ENCODE measurements at regions of chr9 and their contacts with region 1.

Region 1: DNA sequence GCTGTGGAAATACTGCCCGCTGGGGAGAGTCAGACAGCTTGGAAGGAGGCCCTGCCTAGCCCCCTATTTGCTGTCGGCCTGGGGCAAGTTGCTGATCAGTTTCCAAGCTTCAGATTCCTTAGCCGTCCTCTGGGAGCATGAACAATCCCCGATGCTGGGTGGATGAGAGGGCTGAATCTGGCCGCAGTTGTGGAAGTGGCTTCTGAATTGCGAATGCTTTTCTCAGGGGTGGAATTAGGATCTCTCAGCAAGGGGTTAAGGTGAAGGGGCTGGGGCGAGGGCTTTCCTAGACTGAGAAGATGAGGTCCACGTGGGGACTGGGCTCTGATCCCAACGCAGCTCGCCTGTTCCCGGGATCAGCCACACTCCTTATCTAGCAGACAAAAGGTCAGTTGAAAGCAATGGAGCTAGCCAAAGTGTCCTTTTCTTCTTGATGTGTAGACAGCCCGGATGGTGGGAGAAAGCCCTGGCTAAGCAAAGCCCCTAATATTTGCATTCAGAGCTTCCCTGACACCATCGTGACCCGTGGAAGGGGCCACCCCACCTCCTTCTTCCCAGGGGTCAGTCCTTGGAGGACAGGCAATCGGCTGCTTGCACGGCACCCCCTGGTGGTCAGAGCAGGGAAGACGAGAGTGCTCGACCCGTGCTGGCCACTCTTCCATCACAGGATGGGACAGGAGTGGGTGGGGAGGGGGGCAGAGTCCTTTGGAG is 54.9 kb downstream of the COL15A1 start:
- DNase-seq: peak; percentile 61
- ATAC-seq: peak; percentile 62
- H3K4me3 ChIP-seq: no peak overlapping the region
- H3K4me3 Mint-ChIP-seq: no peak overlapping the region
- H3K27ac ChIP-seq: no peak overlapping the region
- H3K27ac Mint-ChIP-seq: no peak overlapping the region
- H3K4me1 ChIP-seq: peaks cover 2 to 15% of the 10 kb centered on the region in 2 donors
- H3K4me1 Mint-ChIP-seq: peaks cover 14% of the 10 kb centered on the region
- H3K27me3 ChIP-seq: peaks cover 0 to 9% (median 0%) of the 10 kb centered on the region in 4 experiments
- H3K27me3 Mint-ChIP-seq: no peaks in the 10 kb centered on the region
- CTCF ChIP-seq: peak; percentile 81

Region 2: GRCh38 chr9:98315551-98316060 is 683.0 kb before region 1 on chr9:
- CTCF ChIA-PET with region 1: no interaction called
- POLR2A ChIA-PET with region 1: no interaction called
- intact Hi-C with region 1: loop called (anchors 5 kb)
- DNase-seq: peak; percentile 85
- ATAC-seq: peak; percentile 92
- H3K4me3 ChIP-seq: no peak overlapping the region
- H3K4me3 Mint-ChIP-seq: no peak overlapping the region
- H3K27ac ChIP-seq: no peak overlapping the region
- H3K27ac Mint-ChIP-seq: no peak overlapping the region
- H3K4me1 ChIP-seq: no peaks in the 10 kb centered on the region
- H3K4me1 Mint-ChIP-seq: peaks cover 2% of the 10 kb centered on the region
- H3K27me3 ChIP-seq: peaks cover 0 to 4% (median 1%) of the 10 kb centered on the region in 4 experiments
- H3K27me3 Mint-ChIP-seq: no peaks in the 10 kb centered on the region
- CTCF ChIP-seq: peak; percentile 88

Region 3: DNA sequence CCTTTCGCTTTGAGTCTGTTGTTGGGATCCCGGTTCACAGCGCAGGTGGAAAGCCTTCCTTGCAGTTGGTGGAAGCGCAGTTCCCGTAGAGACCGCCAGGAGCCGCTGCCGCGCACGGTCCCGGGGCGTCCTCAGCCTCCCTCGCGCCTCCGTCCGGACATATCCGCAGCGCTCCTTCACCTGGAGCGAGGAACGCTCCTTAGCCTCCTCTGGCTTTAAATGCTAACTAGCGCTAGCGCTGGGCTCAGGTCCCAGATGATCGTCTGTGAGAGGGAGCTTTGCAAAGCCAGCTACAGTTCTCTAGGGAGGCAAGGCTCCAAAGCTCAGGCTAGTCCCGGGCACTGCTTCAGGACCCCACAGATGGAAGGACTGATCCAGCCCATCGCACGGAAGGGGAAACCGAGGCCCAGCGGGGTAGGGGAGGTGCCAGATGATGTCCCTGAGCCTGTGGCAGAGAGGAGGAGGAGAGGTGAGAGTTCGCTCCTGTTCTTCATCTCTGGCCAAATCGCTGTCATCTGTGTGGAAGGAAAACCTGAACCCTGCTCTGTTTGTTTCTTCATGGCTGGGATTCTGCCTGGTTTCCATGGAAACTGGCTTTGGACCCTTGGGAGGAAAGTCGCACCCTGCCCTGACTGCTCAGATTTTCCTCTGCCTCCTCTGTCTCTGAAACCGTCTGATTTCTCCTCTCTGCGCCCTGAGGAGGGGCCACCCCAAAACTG is 23.4 kb before region 1 on chr9:
- CTCF ChIA-PET with region 1: interaction called, 43 read pairs
- POLR2A ChIA-PET with region 1: no interaction called
- intact Hi-C with region 1: loop called (anchors 1 kb)
- DNase-seq: peak; percentile 82
- ATAC-seq: peak; percentile 99
- H3K4me3 ChIP-seq: peak overlapping the region in 4 of 5 experiments; percentile 3 to 47 (median 24)
- H3K4me3 Mint-ChIP-seq: peak overlapping the region; percentile 52
- H3K27ac ChIP-seq: no peak overlapping the region
- H3K27ac Mint-ChIP-seq: no peak overlapping the region
- H3K4me1 ChIP-seq: peaks cover 4 to 10% of the 10 kb centered on the region in 2 donors
- H3K4me1 Mint-ChIP-seq: peaks cover 6% of the 10 kb centered on the region
- H3K27me3 ChIP-seq: peaks cover 0 to 21% (median 10%) of the 10 kb centered on the region in 4 experiments
- H3K27me3 Mint-ChIP-seq: peaks cover 20% of the 10 kb centered on the region
- CTCF ChIP-seq: peak; percentile 97

Region 4: GRCh38 chr9:99040911-99041582 is 42.5 kb after region 1 on chr9:
- CTCF ChIA-PET with region 1: interaction called, 13 read pairs
- POLR2A ChIA-PET with region 1: no interaction called
- intact Hi-C with region 1: no loop called
- DNase-seq: no peak
- ATAC-seq: no peak
- H3K4me3 ChIP-seq: no peak overlapping the region
- H3K4me3 Mint-ChIP-seq: no peak overlapping the region
- H3K27ac ChIP-seq: no peak overlapping the region
- H3K27ac Mint-ChIP-seq: no peak overlapping the region
- H3K4me1 ChIP-seq: peaks cover 15 to 17% of the 10 kb centered on the region in 2 donors
- H3K4me1 Mint-ChIP-seq: peaks cover 23% of the 10 kb centered on the region
- H3K27me3 ChIP-seq: no peaks in the 10 kb centered on the region
- H3K27me3 Mint-ChIP-seq: no peaks in the 10 kb centered on the region
- CTCF ChIP-seq: no peak

Region 5: GRCh38 chr9:99104459-99105151 is 106.0 kb after region 1 on chr9 and contains the start of gene TGFBR1:
- CTCF ChIA-PET with region 1: interaction called, 19 read pairs
- POLR2A ChIA-PET with region 1: no interaction called
- intact Hi-C with region 1: no loop called
- DNase-seq: peak; percentile 96
- ATAC-seq: peak; percentile 83
- H3K4me3 ChIP-seq: peak within 1 kb of the TSS; percentile 64 to 87 (median 79)
- H3K4me3 Mint-ChIP-seq: peak within 1 kb of the TSS; percentile 97
- H3K27ac ChIP-seq: peak within 1 kb of the TSS; percentile 16 to 74
- H3K27ac Mint-ChIP-seq: peak within 1 kb of the TSS; percentile 89
- H3K4me1 ChIP-seq: peaks cover 40 to 44% of the 10 kb centered on the region in 2 donors
- H3K4me1 Mint-ChIP-seq: peaks cover 48% of the 10 kb centered on the region
- H3K27me3 ChIP-seq: no peaks in the 10 kb centered on the region
- H3K27me3 Mint-ChIP-seq: no peaks in the 10 kb centered on the region
- CTCF ChIP-seq: no peak
- total RNA-seq, gene TGFBR1: 60.7 TPM in 2 replicates